ENCODE measurements at regions of chr19 and their contacts with region 1.

Region 1: DNA sequence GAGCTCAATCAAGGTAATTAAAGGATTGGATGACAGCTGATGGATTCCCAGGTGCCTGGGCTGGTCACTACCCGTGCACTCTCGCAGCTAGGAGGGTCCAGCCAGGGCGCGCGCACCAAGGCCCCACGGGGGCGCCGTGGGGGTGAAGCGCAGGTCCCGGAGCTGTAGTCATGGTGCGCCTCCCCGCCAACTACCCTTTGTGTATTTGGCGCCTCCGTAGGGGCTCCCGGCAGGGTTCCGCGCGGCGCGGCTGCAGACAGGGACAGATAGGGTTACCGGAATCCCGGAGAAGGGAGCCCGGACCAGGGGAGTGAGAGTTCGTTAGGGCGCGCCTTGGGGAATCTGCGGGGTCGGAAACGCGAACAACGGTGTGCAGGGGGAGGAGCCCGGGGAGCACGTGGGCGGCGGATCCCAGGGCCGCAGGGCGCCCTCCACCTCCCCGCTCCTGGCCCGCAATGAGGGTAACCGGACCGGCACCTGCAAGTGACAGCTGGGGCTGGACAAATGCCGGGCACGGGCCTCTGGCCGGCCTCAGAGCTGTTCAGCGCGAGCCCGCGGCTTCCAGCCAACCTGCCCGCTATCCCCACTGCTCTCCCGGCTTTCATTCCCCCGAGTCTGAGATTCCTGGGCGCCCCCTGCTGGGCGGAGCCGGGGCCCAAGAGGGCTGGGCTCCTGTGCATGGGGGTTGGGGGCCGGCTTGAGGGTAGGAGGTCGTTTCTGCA is 3.4 kb upstream of the PRAM1 start:
- DNase-seq: peak; percentile 58
- H3K4me3 Mint-ChIP-seq: peak overlapping the region; percentile 86
- H3K27ac Mint-ChIP-seq: peak overlapping the region; percentile 73
- H3K4me1 Mint-ChIP-seq: peaks cover 5% of the 10 kb centered on the region
- H3K27me3 Mint-ChIP-seq: no peaks in the 10 kb centered on the region

Region 2: GRCh38 chr19:8363803-8364771 is 141.8 kb before region 1 on chr19 and contains the start of gene ANGPTL4:
- intact Hi-C with region 1: loop called (anchors 5 kb)
- DNase-seq: peak; percentile 66
- H3K4me3 Mint-ChIP-seq: peak within 1 kb of the TSS; percentile 86
- H3K27ac Mint-ChIP-seq: peak within 1 kb of the TSS; percentile 81
- H3K4me1 Mint-ChIP-seq: peaks cover 19% of the 10 kb centered on the region
- H3K27me3 Mint-ChIP-seq: peaks cover 19% of the 10 kb centered on the region
- total RNA-seq, gene ANGPTL4: 7.1 and 7.4 TPM in 2 replicates